Transverse colon (tissue), 4 donors: ENCODE measurements at regions of chr10 and their contacts with region 1.

Region 1: GRCh38 chr10:122786269-122786668 is 59.4 kb downstream of the CUZD1 start:
- DNase-seq: no peak
- H3K4me3 ChIP-seq: no peak overlapping the region
- H3K27ac ChIP-seq: no peak overlapping the region
- H3K4me1 ChIP-seq: no peaks in the 10 kb centered on the region
- H3K27me3 ChIP-seq: no peaks in the 10 kb centered on the region
- CTCF ChIP-seq: no peak
- EP300 ChIP-seq: no peak
- POLR2A ChIP-seq: no peak

Region 2: GRCh38 chr10:122852261-122852660 is 66.0 kb after region 1 on chr10:
- in situ Hi-C with region 1: no loop called
- intact Hi-C with region 1: loop called (anchors 2 kb)
- DNase-seq: no peak
- H3K4me3 ChIP-seq: no peak overlapping the region
- H3K27ac ChIP-seq: no peak overlapping the region
- H3K4me1 ChIP-seq: no peaks in the 10 kb centered on the region
- H3K27me3 ChIP-seq: no peaks in the 10 kb centered on the region
- CTCF ChIP-seq: no peak
- EP300 ChIP-seq: no peak
- POLR2A ChIP-seq: no peak

Region 3: GRCh38 chr10:122882766-122883165 is 96.5 kb after region 1 on chr10:
- in situ Hi-C with region 1: no loop called
- intact Hi-C with region 1: no loop called
- DNase-seq: no peak
- H3K4me3 ChIP-seq: no peak overlapping the region
- H3K27ac ChIP-seq: no peak overlapping the region
- H3K4me1 ChIP-seq: peaks cover 4 to 18% (median 11%) of the 10 kb centered on the region in 4 donors
- H3K27me3 ChIP-seq: no peaks in the 10 kb centered on the region
- CTCF ChIP-seq: no peak
- EP300 ChIP-seq: no peak
- POLR2A ChIP-seq: no peak